Heart right ventricle (tissue), 16 donors: ENCODE measurements at regions of chr5 and their contacts with region 1.

Region 1: GRCh38 chr5:179023528-179024430 is at the start of gene ZNF879:
- DNase-seq: peak; percentile 94 to 95
- ATAC-seq: peak; percentile 97 to 99 (median 99)
- H3K4me3 ChIP-seq: peak within 1 kb of the TSS; percentile 22 to 96 (median 74)
- H3K27ac ChIP-seq: peak within 1 kb of the TSS; percentile 80 to 94 (median 88)
- H3K4me1 ChIP-seq: peaks cover 0 to 18% (median 9%) of the 10 kb centered on the region in 9 donors
- H3K27me3 ChIP-seq: no peaks in the 10 kb centered on the region
- CTCF ChIP-seq: no peak
- total RNA-seq, gene ZNF879: 1.8 to 4.5 (median 3.6) TPM

Region 2: GRCh38 chr5:178626484-178627258 is 397.1 kb before region 1 on chr5 and contains the start of gene CLK4:
- intact Hi-C with region 1: loop called in 1 of 10 experiments (anchors 10 kb)
- DNase-seq: peak; percentile 96 to 98
- ATAC-seq: peak; percentile 97 to 99 (median 98)
- H3K4me3 ChIP-seq: peak within 1 kb of the TSS; percentile 75 to 98 (median 92)
- H3K27ac ChIP-seq: peak within 1 kb of the TSS; percentile 94 to 99 (median 95)
- H3K4me1 ChIP-seq: peaks cover 9 to 40% (median 36%) of the 10 kb centered on the region in 9 donors
- H3K27me3 ChIP-seq: no peaks in the 10 kb centered on the region
- CTCF ChIP-seq: no peak
- total RNA-seq, gene CLK4: 12.3 to 25.7 (median 15.5) TPM

Region 3: DNA sequence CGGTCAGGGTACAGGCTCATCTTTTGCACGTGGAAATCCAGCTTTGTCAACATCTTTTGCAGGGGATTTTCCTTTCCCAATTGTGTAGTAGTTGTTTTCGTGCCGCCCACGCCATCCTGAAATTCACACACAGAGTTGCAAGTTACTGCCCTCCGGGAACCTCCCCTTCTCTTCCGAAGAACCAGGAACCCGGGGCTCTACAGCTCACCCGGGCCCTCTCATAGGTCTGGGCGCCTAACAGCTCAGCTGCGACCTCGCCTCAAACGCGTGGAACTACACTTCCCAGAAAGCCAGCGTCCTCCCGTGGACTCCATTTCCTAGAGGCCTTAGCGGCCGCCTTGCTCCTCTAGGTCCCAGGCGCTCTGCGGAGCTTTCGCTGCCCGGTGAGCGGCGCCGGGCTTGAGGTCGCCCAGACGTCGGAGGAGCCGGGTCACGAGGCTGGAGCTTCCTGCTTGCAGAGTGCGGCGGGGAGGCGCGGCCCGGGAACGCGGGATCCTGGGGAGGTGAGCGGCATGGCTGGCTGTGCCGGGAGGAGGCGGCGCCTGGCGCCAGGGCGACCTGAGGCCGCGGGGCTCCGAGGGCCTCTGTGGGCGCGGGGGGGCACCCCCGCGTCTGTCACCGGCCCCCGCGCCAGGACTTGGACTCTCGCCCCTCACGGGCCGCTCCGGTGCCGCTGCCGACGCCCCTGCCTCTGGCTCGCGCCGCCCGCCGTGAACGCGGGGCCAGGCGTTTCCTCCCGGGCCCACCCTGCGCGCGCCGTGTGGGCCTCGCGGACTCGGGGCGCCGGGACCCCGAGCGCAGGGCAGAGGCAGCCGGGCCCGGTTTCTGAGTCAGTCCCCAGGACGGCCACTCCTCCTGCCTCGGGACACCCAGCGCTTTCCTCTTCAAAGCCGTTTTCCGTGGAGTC is 163.9 kb before region 1 on chr5 and contains the start of gene ZNF354B:
- intact Hi-C with region 1: loop called in 2 of 10 experiments (anchors 5 to 10 kb)
- DNase-seq: peak; percentile 88 to 92
- ATAC-seq: peak; percentile 97 to 99 (median 98)
- H3K4me3 ChIP-seq: peak within 1 kb of the TSS; percentile 48 to 96 (median 84)
- H3K27ac ChIP-seq: peak within 1 kb of the TSS; percentile 56 to 91 (median 89)
- H3K4me1 ChIP-seq: peaks cover 0 to 29% (median 18%) of the 10 kb centered on the region in 9 donors
- H3K27me3 ChIP-seq: no peaks in the 10 kb centered on the region
- CTCF ChIP-seq: peak in 5 of 9 donors; percentile 6 to 42 (median 26)
- total RNA-seq, gene ZNF354B: 5.5 to 10.9 (median 7.4) TPM

Region 4: DNA sequence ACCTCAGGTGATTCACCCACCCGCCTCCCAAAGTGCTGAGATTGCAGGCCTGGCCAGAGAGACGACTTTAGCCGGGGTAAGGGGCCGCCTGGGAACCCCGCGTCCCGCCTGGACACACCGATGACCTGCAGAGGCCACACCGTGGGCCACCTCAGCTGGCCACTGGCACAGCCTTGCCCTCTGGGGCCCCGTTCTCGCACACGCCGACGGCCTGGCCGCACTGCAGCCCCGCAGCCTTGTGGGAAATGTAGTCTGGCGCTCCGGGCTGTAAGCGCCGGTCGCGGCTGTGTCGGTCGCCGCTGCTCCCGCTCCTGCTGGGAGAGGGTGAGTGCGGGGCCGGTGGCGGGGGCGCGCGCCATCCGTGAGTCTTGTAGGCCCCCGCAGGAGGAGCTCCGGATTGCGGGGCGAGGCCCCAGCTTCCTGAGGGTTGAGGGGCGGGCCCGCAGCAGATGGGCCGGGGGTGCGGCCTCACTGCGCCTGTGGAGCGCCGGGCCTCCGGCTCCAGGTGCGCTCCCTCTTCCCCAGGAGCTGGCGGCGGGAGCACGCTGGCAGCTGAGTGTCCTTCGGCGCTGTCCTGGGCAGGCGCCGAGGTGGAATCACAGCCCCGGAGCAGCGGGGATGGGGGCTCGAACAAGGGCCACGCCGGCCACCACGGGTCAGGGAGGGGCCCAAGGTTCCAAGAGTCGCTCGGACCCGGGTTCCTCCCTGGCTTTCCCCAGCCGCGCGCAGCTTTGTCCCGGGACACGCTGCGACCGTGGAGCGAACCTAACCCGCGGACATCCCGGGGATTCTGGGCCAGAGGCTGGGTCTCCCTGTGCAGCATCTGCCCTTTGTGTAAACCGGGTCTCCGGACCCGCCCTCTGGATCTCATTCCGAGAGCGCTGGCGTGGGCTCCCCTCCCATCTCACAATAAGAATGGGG is 127.9 kb before region 1 on chr5 and contains the start of gene ZFP2:
- intact Hi-C with region 1: loop called in 1 of 10 experiments (anchors 2 kb)
- DNase-seq: peak; percentile 57 to 73
- ATAC-seq: peak; percentile 94 to 99 (median 98)
- H3K4me3 ChIP-seq: peak within 1 kb of the TSS; percentile 69 to 98 (median 88)
- H3K27ac ChIP-seq: peak within 1 kb of the TSS in 9 of 10 donors; percentile 56 to 80 (median 77)
- H3K4me1 ChIP-seq: peaks cover 0 to 16% (median 6%) of the 10 kb centered on the region in 9 donors
- H3K27me3 ChIP-seq: peaks cover 0 to 13% (median 0%) of the 10 kb centered on the region in 7 donors
- CTCF ChIP-seq: peak in 1 of 9 donors; percentile 11
- total RNA-seq, gene ZFP2: 0.77 to 1.7 (median 1.1) TPM

Region 5: GRCh38 chr5:178940569-178941360 is 83.0 kb before region 1 on chr5 and contains the start of gene ZNF454:
- intact Hi-C with region 1: loop called in 5 of 10 experiments (anchors 1 to 10 kb)
- DNase-seq: peak; percentile 94 to 95
- ATAC-seq: peak; percentile 98 to 99 (median 99)
- H3K4me3 ChIP-seq: peak within 1 kb of the TSS; percentile 54 to 89 (median 76)
- H3K27ac ChIP-seq: peak within 1 kb of the TSS in 9 of 10 donors; percentile 75 to 86 (median 83)
- H3K4me1 ChIP-seq: peaks cover 0 to 19% (median 11%) of the 10 kb centered on the region in 9 donors
- H3K27me3 ChIP-seq: peaks cover 0 to 19% (median 0%) of the 10 kb centered on the region in 7 donors
- CTCF ChIP-seq: peak in 1 of 9 donors; percentile 8
- total RNA-seq, gene ZNF454: 1.4 to 2.7 (median 1.7) TPM

Region 6: DNA sequence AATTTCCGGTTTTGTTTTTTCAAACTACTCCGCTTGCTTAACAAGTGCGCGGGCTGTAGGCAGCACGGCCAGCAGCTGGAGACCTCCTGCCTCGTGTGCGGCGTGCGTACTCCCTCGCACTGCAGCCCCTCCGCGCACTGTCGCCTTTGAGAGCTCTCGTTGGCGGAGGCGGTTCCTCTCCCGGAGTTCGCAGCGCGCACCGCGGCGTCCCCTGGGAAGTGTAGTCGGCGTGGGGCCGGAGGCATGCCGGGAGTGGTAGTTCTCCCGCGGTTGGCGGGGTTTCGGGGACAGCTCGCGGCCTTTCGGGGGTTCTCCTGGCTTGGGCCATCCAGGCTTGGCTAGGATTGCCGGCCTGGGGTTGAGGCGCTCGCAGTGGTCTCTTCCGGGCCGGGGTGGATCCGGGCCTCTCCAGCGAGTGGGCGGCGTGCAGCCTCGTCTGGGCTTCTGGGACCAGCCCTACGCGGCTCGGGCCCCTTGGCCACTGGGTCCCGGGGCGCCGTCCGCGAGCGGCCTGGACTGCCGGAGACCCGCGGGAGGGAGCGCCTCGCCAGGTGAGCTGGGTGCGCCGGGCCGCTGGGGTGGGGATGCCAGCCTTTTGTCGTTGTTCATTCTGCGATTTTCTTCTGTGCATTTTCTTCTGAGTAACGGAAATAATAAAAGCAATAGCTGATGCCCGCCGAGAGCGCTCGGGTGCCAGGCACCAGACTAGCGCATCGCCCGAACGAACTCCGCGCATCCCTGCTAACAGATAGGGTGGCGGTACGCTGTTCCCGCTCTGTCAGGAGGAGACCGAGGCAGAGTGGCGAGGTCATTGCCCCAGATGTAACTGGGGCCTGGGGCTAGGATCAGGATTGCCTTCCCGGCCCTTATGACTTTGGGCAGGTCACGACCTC is 36.6 kb after region 1 on chr5 and contains the start of gene ZNF354C:
- intact Hi-C with region 1: loop called in 4 of 10 experiments (anchors 1 to 2 kb)
- DNase-seq: peak; percentile 91 to 93
- ATAC-seq: peak; percentile 98 to 100 (median 99)
- H3K4me3 ChIP-seq: peak within 1 kb of the TSS; percentile 60 to 85 (median 80)
- H3K27ac ChIP-seq: peak within 1 kb of the TSS; percentile 31 to 89 (median 80)
- H3K4me1 ChIP-seq: peaks cover 5 to 20% (median 11%) of the 10 kb centered on the region in 9 donors
- H3K27me3 ChIP-seq: no peaks in the 10 kb centered on the region
- CTCF ChIP-seq: peak in 2 of 9 donors; percentile 10 to 12
- total RNA-seq, gene ZNF354C: 3.5 to 5.5 (median 4.2) TPM

Region 7: GRCh38 chr5:179125789-179126505 is 102.2 kb after region 1 on chr5:
- intact Hi-C with region 1: no loop called
- DNase-seq: no peak
- ATAC-seq: no peak
- H3K4me3 ChIP-seq: no peak overlapping the region
- H3K27ac ChIP-seq: no peak overlapping the region
- H3K4me1 ChIP-seq: no peaks in the 10 kb centered on the region
- H3K27me3 ChIP-seq: no peaks in the 10 kb centered on the region
- CTCF ChIP-seq: no peak